Psoas muscle (tissue), 8 donors: ENCODE measurements at regions of chr1 and their contacts with region 1.

Region 1: GRCh38 chr1:202571347-202572339 is 138.6 kb downstream of the SYT2 start:
- DNase-seq: no peak
- ATAC-seq: peak in 3 of 4 donors; percentile 35 to 59 (median 47)
- H3K4me3 ChIP-seq: no peak overlapping the region
- H3K27ac ChIP-seq: peak overlapping the region; percentile 27
- H3K4me1 ChIP-seq: peaks cover 32% of the 10 kb centered on the region
- H3K27me3 ChIP-seq: no peaks in the 10 kb centered on the region
- CTCF ChIP-seq: peak; percentile 71

Region 2: DNA sequence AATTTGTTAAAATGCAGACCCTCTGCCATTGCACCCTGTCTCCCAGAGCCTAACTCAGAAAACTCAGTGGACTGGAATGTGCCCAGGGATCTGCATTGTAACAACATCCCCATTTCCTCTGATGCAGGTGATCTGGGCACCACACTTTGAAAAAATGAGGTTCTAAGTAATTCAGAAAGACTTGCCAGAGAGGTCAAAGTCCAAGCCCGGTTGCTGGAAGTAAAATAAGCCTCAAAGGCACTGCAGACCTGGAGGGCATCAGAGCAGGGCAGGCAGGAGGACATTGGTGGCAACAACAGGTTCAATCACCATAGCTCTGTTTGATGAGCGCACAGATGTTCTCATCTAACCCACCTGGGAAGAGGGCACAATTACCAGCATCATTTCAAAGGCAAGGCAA is 47.9 kb after region 1 on chr1:
- intact Hi-C with region 1: loop called (anchors 1 to 10 kb)
- DNase-seq: no peak
- ATAC-seq: no peak
- H3K4me3 ChIP-seq: no peak overlapping the region
- H3K27ac ChIP-seq: no peak overlapping the region
- H3K4me1 ChIP-seq: peaks cover 39% of the 10 kb centered on the region
- H3K27me3 ChIP-seq: no peaks in the 10 kb centered on the region
- CTCF ChIP-seq: no peak

Region 3: GRCh38 chr1:202625416-202626360 is 54.0 kb after region 1 on chr1:
- intact Hi-C with region 1: loop called in 1 of 2 experiments (anchors 10 kb)
- DNase-seq: peak; percentile 73 to 88
- ATAC-seq: peak; percentile 82 to 89 (median 84)
- H3K4me3 ChIP-seq: no peak overlapping the region
- H3K27ac ChIP-seq: no peak overlapping the region
- H3K4me1 ChIP-seq: peaks cover 13% of the 10 kb centered on the region
- H3K27me3 ChIP-seq: peaks cover 0 to 3% (median 0%) of the 10 kb centered on the region in 3 donors
- CTCF ChIP-seq: peak; percentile 59